ENCODE measurements at regions of chr5 and their contacts with region 1.

Region 1: GRCh38 chr5:66171349-66172344 is 27.5 kb downstream of the SREK1 start:
- DNase-seq: peak; percentile 48
- H3K4me3 Mint-ChIP-seq: no peak overlapping the region
- H3K27ac Mint-ChIP-seq: no peak overlapping the region
- H3K4me1 Mint-ChIP-seq: peaks cover 29% of the 10 kb centered on the region
- H3K27me3 Mint-ChIP-seq: no peaks in the 10 kb centered on the region

Region 2: DNA sequence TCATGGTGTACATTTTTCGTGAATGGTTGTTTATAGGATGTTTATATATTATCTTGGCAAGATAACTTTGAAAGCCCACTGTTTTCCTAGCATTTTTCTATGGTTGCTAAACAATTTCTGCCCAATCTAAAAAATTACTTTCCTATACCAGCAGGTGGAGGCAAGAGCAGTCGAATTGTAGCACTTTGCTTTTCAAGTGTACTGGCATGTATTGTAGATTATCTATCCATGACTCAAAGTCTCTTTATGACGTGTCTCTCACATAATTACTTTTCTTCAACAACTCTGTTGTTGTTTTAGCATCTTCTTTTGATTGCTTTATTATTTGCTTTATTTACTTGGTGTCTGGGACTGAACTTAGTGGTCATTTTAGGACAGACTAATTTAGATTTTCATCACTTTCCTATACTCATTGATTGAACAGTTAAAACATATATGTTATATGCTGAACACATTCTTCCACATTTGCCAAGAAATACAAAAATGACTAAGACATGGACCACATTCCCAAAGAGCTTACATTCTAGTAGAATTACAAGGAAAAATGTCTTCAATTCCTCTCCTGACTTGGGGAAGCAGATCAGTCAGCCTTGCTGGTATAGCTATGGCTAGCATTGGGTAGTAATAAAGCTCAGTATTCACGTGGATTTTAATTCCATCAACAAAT is 428.9 kb before region 1 on chr5:
- CTCF ChIA-PET with region 1: interaction called, 7 read pairs
- POLR2A ChIA-PET with region 1: no interaction called
- intact Hi-C with region 1: loop called (anchors 1 kb)
- DNase-seq: peak; percentile 42
- H3K4me3 Mint-ChIP-seq: no peak overlapping the region
- H3K27ac Mint-ChIP-seq: no peak overlapping the region
- H3K4me1 Mint-ChIP-seq: peaks cover 12% of the 10 kb centered on the region
- H3K27me3 Mint-ChIP-seq: no peaks in the 10 kb centered on the region

Region 3: GRCh38 chr5:66151030-66151429 is 20.6 kb before region 1 on chr5:
- CTCF ChIA-PET with region 1: interaction called, 10 read pairs
- POLR2A ChIA-PET with region 1: no interaction called
- intact Hi-C with region 1: loop called (anchors 1 kb)
- DNase-seq: peak; percentile 61
- H3K4me3 Mint-ChIP-seq: peak overlapping the region; percentile 39
- H3K27ac Mint-ChIP-seq: peak overlapping the region; percentile 88
- H3K4me1 Mint-ChIP-seq: peaks cover 56% of the 10 kb centered on the region
- H3K27me3 Mint-ChIP-seq: no peaks in the 10 kb centered on the region

Region 4: DNA sequence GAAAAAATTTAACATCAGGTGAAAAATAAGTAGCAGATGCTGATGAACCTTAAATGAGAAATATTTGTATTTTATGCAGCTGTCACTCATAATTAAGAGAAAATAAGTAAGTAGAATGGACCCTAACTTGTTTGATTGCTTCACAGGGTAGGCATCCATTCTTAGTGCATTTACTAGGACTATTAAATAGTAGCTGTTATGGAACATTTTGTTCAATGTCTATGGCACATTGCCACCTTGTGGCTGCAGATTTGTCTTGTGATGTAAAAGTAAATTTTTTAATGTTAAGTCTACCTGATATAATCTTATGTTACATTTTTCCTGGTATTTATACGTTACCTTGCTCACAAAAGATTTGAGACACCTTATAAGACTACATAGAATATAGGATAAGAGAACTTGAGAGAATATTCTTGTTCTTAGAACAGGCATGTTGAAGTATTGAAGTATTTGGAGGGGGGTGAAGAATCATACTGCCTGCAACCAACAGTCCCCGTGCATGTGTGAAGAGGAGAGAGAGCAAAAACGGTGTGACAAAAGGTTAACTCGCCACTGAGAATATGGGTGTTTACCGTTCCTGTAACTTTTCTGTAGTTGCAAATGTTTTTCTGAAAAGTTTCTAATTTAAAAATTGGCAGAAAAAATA is 585.7 kb after region 1 on chr5:
- CTCF ChIA-PET with region 1: no interaction called
- POLR2A ChIA-PET with region 1: no interaction called
- intact Hi-C with region 1: loop called (anchors 5 kb)
- DNase-seq: peak; percentile 37
- H3K4me3 Mint-ChIP-seq: no peak overlapping the region
- H3K27ac Mint-ChIP-seq: no peak overlapping the region
- H3K4me1 Mint-ChIP-seq: no peaks in the 10 kb centered on the region
- H3K27me3 Mint-ChIP-seq: peaks cover 15% of the 10 kb centered on the region

Measured in activated CD4-positive, alpha-beta memory T cell treated with anti-CD3 and anti-CD28 coated beads for 36 hours (primary cell).